GM12878 (cell line): ENCODE measurements at regions of chr10 and their contacts with region 1.

Region 1: DNA sequence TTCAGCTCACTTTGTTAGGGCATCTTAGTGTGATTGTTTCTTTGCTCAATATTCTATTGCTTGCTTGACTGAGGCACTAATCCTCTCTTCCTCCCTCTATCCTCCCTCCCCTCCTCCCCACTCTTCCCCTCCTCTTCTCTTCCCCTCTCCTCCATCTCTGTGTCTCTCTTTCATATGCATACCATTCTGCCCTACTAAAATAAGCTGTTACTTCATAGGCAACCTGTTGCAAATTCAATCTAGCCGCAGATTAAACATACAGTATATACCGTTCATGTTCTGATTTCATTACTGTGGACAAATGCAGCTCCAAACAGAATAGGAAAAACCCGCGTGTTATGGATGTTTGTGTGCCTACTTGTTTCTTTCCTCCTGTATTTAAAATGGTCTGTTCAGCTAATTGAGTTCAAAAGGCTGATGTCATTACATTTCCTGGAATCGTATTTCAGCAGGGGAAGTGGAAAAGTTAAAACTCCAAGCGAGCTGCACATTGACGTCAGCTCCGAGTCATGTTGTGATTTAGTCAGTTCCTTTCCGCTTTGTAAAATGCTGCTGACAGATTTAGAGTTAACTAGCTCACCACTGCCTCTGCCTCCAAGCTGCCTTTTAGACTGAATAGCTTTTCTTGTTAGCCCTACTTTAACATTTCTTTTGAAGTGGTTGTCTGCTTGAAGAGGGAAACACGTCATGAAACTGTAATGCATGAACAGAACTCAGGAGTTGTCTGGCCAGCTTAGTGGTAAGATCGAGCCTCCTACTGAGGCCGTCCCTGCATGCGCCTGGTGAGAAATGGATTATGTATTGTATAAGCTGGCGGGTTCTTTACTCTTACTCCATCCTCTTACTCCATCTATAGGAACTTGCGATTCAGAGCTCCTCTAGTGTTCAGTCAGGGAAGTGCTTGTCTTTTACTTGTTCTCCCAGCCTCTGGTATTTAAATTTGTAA is 69.0 kb downstream of the CREM start:
- DNase-seq: peak; percentile 83
- ATAC-seq: peak; percentile 96
- H3K4me3 ChIP-seq: peak overlapping the region; percentile 66
- H3K27ac ChIP-seq: peak overlapping the region; percentile 82
- H3K4me1 ChIP-seq: peaks cover 8% of the 10 kb centered on the region; the same call in 1 of the 2 replicates
- H3K27me3 ChIP-seq: no peaks in the 10 kb centered on the region
- CTCF ChIP-seq: peak; percentile 82 to 86 (median 86)
- EP300 ChIP-seq: peak; percentile 78 to 97; a peak in 3 of 4 replicates
- POLR2A ChIP-seq: peak; percentile 53
- RAD21 ChIP-seq: peak; percentile 77

Region 2: DNA sequence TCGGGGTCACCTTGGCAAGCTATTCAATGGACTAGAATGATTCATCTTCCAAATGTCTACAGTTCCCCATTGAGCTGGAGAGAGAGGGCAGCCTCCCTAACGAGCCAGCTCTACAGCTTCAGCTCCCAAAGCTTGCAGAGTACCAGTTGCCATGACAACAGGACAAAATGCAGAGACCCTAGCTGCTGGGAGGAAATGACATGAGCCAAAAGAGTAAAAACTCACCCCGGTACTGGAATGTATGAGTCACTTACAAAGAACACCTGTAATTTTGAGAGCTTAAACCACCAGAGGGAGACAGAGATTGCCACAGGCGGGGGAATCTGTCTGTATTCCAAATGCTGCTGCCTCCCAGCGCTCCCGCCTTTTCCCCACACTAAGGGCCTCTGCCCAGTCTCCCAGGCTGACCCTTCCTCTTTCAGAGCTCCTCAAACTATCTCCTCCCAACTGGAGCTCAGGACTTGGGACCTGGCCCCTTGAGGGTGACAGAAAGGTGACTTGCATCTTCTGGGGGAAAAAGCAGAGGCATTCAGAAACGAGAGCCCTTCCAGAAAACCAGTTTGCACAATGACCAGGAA is 201.0 kb before region 1 on chr10:
- CTCF ChIA-PET with region 1: interaction called, 7 read pairs
- POLR2A ChIA-PET with region 1: no interaction called
- RAD21 ChIA-PET with region 1: interaction called, 14 read pairs
- SMC1A ChIA-PET with region 1: interaction called, 15 read pairs
- in situ Hi-C with region 1: no loop called
- intact Hi-C with region 1: no loop called
- DNase-seq: peak; percentile 38
- ATAC-seq: peak; percentile 92
- H3K4me3 ChIP-seq: no peak overlapping the region
- H3K27ac ChIP-seq: no peak overlapping the region
- H3K4me1 ChIP-seq: peaks cover 4% of the 10 kb centered on the region; the same call in 1 of the 2 replicates
- H3K27me3 ChIP-seq: no peaks in the 10 kb centered on the region
- CTCF ChIP-seq: peak; percentile 62 to 72 (median 69)
- EP300 ChIP-seq: peak in 1 of 2 experiments; percentile 44; a peak in 1 of 4 replicates
- POLR2A ChIP-seq: no peak
- RAD21 ChIP-seq: peak; percentile 66

Region 3: DNA sequence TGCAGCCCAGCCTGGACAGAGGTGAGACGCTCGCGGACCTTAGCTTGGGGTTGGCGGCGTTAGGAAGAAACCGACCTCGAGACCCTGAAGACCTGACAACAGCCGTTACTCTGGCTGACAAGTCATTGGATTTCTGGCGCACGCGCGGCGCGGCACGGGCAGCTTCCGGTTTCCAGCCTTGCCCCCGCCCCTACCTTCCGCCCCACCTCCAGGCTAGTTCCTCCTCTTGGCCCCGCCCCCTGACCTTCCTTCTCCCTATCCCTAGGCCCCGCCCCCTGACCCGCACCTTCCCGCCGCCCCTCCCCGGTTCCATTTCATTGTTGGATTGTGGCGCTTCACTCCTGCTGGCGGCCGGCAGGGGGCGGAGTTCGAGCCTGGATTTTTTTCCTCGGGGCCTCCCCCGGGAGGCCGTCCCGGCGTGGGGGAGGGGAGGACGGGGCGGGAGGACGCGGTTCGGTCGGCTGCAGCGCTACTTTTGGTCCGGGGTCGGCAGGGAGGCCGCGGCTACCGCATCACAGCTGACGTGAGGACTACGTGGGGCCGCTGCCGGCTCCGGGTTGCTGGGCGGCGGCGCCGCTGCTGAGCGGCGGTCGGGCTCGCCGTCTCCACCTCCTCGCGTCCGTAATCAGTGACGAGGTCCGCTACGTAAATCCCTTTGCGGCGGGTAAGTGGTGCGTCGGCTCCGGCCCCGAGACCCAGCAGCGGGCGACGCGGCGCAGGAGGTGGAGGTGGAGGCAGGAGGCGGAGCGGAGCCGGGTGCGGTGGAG is 68.9 kb before region 1 on chr10 and contains the start of gene CREM:
- CTCF ChIA-PET with region 1: interaction called, 185 read pairs
- POLR2A ChIA-PET with region 1: interaction called, 84 read pairs
- RAD21 ChIA-PET with region 1: interaction called, 201 read pairs
- SMC1A ChIA-PET with region 1: interaction called, 213 read pairs
- in situ Hi-C with region 1: no loop called
- intact Hi-C with region 1: loop called (anchors 1 kb)
- DNase-seq: peak; percentile 79
- ATAC-seq: peak; percentile 78
- H3K4me3 ChIP-seq: peak within 1 kb of the TSS; percentile 81
- H3K27ac ChIP-seq: peak within 1 kb of the TSS; percentile 99
- H3K4me1 ChIP-seq: peaks cover 3% of the 10 kb centered on the region; the same call in 1 of the 2 replicates
- H3K27me3 ChIP-seq: no peaks in the 10 kb centered on the region
- CTCF ChIP-seq: peak; percentile 60 to 84 (median 81)
- EP300 ChIP-seq: peak; percentile 90 to 92; a peak in 3 of 4 replicates
- POLR2A ChIP-seq: peak; percentile 97
- RAD21 ChIP-seq: peak; percentile 91
- polyA plus RNA-seq, gene CREM: 64.2 to 70.7 TPM

Region 4: GRCh38 chr10:35153716-35154479 is 41.7 kb before region 1 on chr10:
- CTCF ChIA-PET with region 1: interaction called, 38 read pairs
- POLR2A ChIA-PET with region 1: interaction called, 16 read pairs
- RAD21 ChIA-PET with region 1: interaction called, 56 read pairs
- SMC1A ChIA-PET with region 1: interaction called, 58 read pairs
- in situ Hi-C with region 1: no loop called
- intact Hi-C with region 1: loop called (anchors 1 kb)
- DNase-seq: no peak
- ATAC-seq: no peak
- H3K4me3 ChIP-seq: no peak overlapping the region
- H3K27ac ChIP-seq: no peak overlapping the region
- H3K4me1 ChIP-seq: peaks cover 22% of the 10 kb centered on the region
- H3K27me3 ChIP-seq: no peaks in the 10 kb centered on the region
- CTCF ChIP-seq: no peak
- EP300 ChIP-seq: no peak
- POLR2A ChIP-seq: no peak
- RAD21 ChIP-seq: no peak

Region 5: DNA sequence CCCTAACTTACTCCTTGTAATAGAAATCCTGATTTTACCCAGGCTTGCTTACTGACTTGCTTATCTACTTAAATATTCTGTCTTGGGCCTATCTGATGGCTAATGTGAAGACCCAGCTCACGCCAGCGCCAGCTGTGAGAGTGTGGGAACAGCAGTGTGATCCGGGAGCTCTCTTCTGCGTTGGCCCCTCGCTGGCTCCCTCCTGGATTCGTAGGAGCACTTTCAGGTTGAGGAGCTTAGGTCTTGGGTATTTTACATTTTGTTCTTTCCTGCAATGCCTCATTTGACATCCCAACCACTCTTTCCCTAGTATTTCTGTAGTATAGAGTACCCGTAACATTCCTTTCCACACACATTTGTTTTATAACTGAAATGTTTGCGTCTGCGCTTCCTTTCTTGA is 17.3 kb before region 1 on chr10:
- CTCF ChIA-PET with region 1: interaction called, 54 read pairs
- POLR2A ChIA-PET with region 1: interaction called, 12 read pairs
- RAD21 ChIA-PET with region 1: interaction called, 57 read pairs
- SMC1A ChIA-PET with region 1: interaction called, 48 read pairs
- in situ Hi-C with region 1: no loop called
- intact Hi-C with region 1: no loop called
- DNase-seq: no peak
- ATAC-seq: no peak
- H3K4me3 ChIP-seq: no peak overlapping the region
- H3K27ac ChIP-seq: no peak overlapping the region
- H3K4me1 ChIP-seq: no peaks in the 10 kb centered on the region
- H3K27me3 ChIP-seq: no peaks in the 10 kb centered on the region
- CTCF ChIP-seq: no peak
- EP300 ChIP-seq: no peak
- POLR2A ChIP-seq: no peak
- RAD21 ChIP-seq: no peak

Region 6: DNA sequence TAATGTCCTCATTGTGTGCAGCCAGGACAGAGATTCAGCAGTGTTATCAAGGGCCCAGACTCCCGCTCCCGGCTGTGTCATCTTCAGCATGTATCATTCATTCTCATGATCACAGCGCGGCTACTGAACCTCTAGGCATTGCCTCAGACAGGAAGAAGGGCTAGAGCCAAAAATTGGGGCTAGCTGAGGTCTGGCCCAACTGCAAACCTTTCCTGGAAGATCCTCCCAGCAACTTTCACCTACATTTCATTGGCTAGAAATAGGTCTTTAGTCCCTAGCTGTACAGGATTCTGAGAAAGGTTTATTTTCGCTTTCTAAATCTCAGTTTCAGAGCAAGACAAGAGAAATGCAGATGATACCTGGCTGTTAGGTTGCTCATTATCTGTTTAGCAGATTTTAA is 12.9 kb after region 1 on chr10:
- CTCF ChIA-PET with region 1: interaction called, 119 read pairs
- POLR2A ChIA-PET with region 1: interaction called, 10 read pairs
- RAD21 ChIA-PET with region 1: interaction called, 24 read pairs
- SMC1A ChIA-PET with region 1: interaction called, 56 read pairs
- in situ Hi-C with region 1: no loop called
- intact Hi-C with region 1: no loop called
- DNase-seq: no peak
- ATAC-seq: peak; percentile 89
- H3K4me3 ChIP-seq: no peak overlapping the region
- H3K27ac ChIP-seq: peak overlapping the region; percentile 49
- H3K4me1 ChIP-seq: peaks cover 14% of the 10 kb centered on the region
- H3K27me3 ChIP-seq: no peaks in the 10 kb centered on the region
- CTCF ChIP-seq: no peak
- EP300 ChIP-seq: no peak
- POLR2A ChIP-seq: no peak
- RAD21 ChIP-seq: no peak

Region 7: GRCh38 chr10:35225204-35225603 is 29.6 kb after region 1 on chr10:
- CTCF ChIA-PET with region 1: interaction called, 119 read pairs
- POLR2A ChIA-PET with region 1: no interaction called
- RAD21 ChIA-PET with region 1: interaction called, 25 read pairs
- SMC1A ChIA-PET with region 1: interaction called, 102 read pairs
- in situ Hi-C with region 1: no loop called
- intact Hi-C with region 1: no loop called
- DNase-seq: no peak
- ATAC-seq: no peak
- H3K4me3 ChIP-seq: no peak overlapping the region
- H3K27ac ChIP-seq: no peak overlapping the region
- H3K4me1 ChIP-seq: peaks cover 3% of the 10 kb centered on the region; the same call in 1 of the 2 replicates
- H3K27me3 ChIP-seq: no peaks in the 10 kb centered on the region
- CTCF ChIP-seq: no peak
- EP300 ChIP-seq: no peak
- POLR2A ChIP-seq: no peak
- RAD21 ChIP-seq: no peak

Region 8: DNA sequence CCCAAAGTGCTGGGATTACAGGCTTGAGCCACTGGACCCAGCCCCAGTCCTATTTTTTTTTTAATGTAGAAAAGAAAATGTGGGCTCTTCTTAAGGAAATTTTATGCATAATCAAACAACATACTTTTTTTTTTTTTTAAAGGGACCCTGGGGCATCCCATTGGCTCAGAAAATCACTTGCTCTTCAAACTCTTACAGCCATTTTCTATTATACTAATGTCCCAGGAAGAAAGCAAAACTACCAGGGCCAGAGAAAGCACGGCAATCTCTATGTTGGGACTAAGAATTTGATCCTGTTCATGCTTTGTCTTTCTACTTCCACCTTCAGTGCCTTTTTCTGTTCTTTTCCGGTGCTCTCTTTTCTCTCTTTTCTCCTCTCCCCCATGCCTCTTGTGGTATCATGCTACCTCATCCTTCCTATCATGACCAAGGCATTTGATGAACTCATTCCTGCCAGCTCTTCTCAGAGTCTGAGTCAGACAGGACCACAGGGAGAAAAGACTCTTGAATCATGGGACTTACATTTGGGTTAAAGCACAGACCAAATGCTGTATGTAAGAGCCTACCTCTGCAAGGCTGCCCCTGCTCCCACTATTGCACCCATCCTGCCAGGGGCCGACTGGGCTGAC is 64.2 kb after region 1 on chr10:
- CTCF ChIA-PET with region 1: no interaction called
- POLR2A ChIA-PET with region 1: no interaction called
- RAD21 ChIA-PET with region 1: no interaction called
- SMC1A ChIA-PET with region 1: no interaction called
- in situ Hi-C with region 1: no loop called
- intact Hi-C with region 1: no loop called
- DNase-seq: no peak
- ATAC-seq: no peak
- H3K4me3 ChIP-seq: no peak overlapping the region
- H3K27ac ChIP-seq: no peak overlapping the region
- H3K4me1 ChIP-seq: no peaks in the 10 kb centered on the region
- H3K27me3 ChIP-seq: no peaks in the 10 kb centered on the region
- CTCF ChIP-seq: no peak
- EP300 ChIP-seq: no peak
- POLR2A ChIP-seq: no peak
- RAD21 ChIP-seq: no peak

Region 9: GRCh38 chr10:35487336-35488034 is 291.9 kb after region 1 on chr10:
- CTCF ChIA-PET with region 1: no interaction called
- POLR2A ChIA-PET with region 1: no interaction called
- RAD21 ChIA-PET with region 1: no interaction called
- SMC1A ChIA-PET with region 1: no interaction called
- in situ Hi-C with region 1: no loop called
- intact Hi-C with region 1: no loop called
- DNase-seq: no peak
- ATAC-seq: no peak
- H3K4me3 ChIP-seq: no peak overlapping the region
- H3K27ac ChIP-seq: no peak overlapping the region
- H3K4me1 ChIP-seq: no peaks in the 10 kb centered on the region
- H3K27me3 ChIP-seq: no peaks in the 10 kb centered on the region
- CTCF ChIP-seq: no peak
- EP300 ChIP-seq: no peak
- POLR2A ChIP-seq: no peak
- RAD21 ChIP-seq: no peak